Mammary epithelial cell (primary cell): ENCODE measurements at regions of chr15 and their contacts with region 1.

Region 1: DNA sequence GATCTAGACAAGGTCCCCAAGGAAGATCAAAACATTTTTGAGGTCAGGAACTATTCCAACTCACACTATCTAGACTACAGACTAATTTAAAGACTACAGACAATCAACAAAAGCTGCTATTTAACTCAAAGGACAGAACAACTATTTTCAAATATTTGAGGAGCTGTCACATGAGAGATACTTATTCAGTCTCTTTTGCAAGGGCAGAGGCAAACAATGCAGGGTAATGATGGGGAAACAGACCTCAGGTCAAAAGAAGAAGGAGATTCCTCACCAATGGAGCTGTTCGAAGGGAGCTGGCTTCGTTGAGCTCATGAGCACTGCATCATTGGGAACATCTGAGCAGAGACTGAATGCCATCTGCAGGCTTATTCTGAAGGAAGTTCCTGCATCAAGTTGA is 231.9 kb downstream of the DTWD1 start:
- DNase-seq: no peak
- H3K4me3 ChIP-seq: no peak overlapping the region
- H3K27ac ChIP-seq: no peak overlapping the region
- H3K4me1 ChIP-seq: no peaks in the 10 kb centered on the region
- H3K27me3 ChIP-seq: no peaks in the 10 kb centered on the region
- CTCF ChIP-seq: no peak

Region 2: DNA sequence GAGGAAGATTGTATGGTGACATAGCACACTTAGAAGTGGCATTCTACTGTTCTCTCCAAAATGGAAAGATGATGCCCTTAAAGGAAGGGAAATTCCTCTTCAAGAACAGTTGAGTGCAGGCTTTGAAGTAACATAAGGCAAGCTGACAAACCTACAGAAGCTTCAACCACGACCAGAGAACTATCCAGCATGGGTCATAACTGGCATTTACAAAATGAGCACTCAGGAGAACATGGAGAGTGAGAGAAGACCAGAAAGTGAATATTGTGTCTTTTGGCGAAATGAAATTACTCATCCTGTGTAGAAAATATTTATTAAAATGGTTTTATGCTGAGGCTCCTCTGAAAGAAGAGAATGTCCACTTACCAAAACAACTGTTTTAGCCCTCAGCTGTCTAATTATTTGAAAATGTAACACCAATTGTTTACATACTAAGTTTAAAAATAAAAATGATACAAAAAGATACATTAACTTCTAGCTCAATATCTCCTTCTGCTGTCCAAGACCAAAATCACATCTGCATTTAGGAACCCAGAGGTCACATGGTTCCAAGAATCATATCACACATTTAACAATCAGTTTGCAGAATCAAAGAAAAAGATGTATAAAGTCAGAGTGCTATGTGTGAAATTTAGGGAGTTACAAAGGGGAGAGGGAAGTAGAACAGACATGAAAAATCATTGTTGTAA is 49.4 kb after region 1 on chr15:
- CTCF ChIA-PET with region 1: no interaction called
- dilution Hi-C with region 1: no loop called
- in situ Hi-C with region 1: no loop called
- intact Hi-C with region 1: loop called (anchors 5 kb)
- DNase-seq: peak; percentile 5
- H3K4me3 ChIP-seq: no peak overlapping the region
- H3K27ac ChIP-seq: no peak overlapping the region
- H3K4me1 ChIP-seq: no peaks in the 10 kb centered on the region
- H3K27me3 ChIP-seq: no peaks in the 10 kb centered on the region
- CTCF ChIP-seq: peak; percentile 14 to 42

Region 3: DNA sequence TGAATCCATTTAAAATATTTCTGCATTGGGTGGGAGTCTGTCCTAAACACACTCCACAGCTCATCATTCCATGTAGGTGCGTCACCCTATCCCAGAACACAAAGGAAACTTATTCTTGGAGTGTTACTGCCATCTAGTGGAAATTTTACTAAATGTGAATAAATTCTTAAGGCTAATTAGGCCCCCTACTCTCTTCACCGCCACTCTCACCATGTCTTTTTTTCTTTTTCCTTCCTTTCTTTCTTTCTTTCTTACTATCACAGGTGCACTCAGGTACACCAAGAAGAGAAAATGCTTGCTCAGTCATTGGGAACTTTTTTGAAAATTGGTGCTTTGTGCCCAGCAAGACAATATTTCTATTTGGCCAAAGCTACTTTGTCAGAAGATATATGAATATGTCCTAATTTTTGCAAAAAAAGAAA is 292.7 kb after region 1 on chr15:
- CTCF ChIA-PET with region 1: no interaction called
- dilution Hi-C with region 1: no loop called
- in situ Hi-C with region 1: no loop called
- intact Hi-C with region 1: no loop called
- DNase-seq: peak; percentile 63
- H3K4me3 ChIP-seq: no peak overlapping the region
- H3K27ac ChIP-seq: no peak overlapping the region
- H3K4me1 ChIP-seq: peaks cover 10% of the 10 kb centered on the region
- H3K27me3 ChIP-seq: no peaks in the 10 kb centered on the region
- CTCF ChIP-seq: peak; percentile 33 to 48

Region 4: GRCh38 chr15:50315814-50316630 is 463.3 kb after region 1 on chr15:
- CTCF ChIA-PET with region 1: no interaction called
- dilution Hi-C with region 1: no loop called
- in situ Hi-C with region 1: no loop called
- intact Hi-C with region 1: no loop called
- DNase-seq: peak; percentile 22
- H3K4me3 ChIP-seq: no peak overlapping the region
- H3K27ac ChIP-seq: no peak overlapping the region
- H3K4me1 ChIP-seq: no peaks in the 10 kb centered on the region
- H3K27me3 ChIP-seq: no peaks in the 10 kb centered on the region
- CTCF ChIP-seq: peak; percentile 60 to 62